SK-N-SH (cell line): ENCODE measurements at regions of chr1 and their contacts with region 1.

Region 1: GRCh38 chr1:21963477-21964217 is 13.2 kb upstream of the CELA3B start:
- DNase-seq: peak; percentile 81
- H3K4me3 ChIP-seq: no peak overlapping the region; a peak in 1 of 4 replicates
- H3K27ac ChIP-seq: no peak overlapping the region
- H3K4me1 ChIP-seq: peaks cover 0 to 11% of the 10 kb centered on the region in 2 experiments; a peak in 1 of 4 replicates
- H3K27me3 ChIP-seq: no peaks in the 10 kb centered on the region
- CTCF ChIP-seq: peak; percentile 95
- EP300 ChIP-seq: no peak
- RAD21 ChIP-seq: peak; percentile 96

Region 2: GRCh38 chr1:21669258-21670058 is 294.2 kb before region 1 on chr1 and contains the start of gene RAP1GAP:
- CTCF ChIA-PET with region 1: interaction called, 11 read pairs
- POLR2A ChIA-PET with region 1: no interaction called
- DNase-seq: peak; percentile 86
- H3K4me3 ChIP-seq: peak within 1 kb of the TSS in 1 of 2 experiments; percentile 44; a peak in 2 of 4 replicates
- H3K27ac ChIP-seq: no peak within 1 kb of the TSS
- H3K4me1 ChIP-seq: peaks cover 9 to 30% of the 10 kb centered on the region in 2 experiments; a peak in 3 of 4 replicates
- H3K27me3 ChIP-seq: peaks cover 8% of the 10 kb centered on the region; the same call in 1 of the 2 replicates
- CTCF ChIP-seq: no peak
- EP300 ChIP-seq: no peak
- RAD21 ChIP-seq: no peak
- polyA plus RNA-seq, gene RAP1GAP: 0.78 and 0.99 TPM in 2 replicates

Region 3: DNA sequence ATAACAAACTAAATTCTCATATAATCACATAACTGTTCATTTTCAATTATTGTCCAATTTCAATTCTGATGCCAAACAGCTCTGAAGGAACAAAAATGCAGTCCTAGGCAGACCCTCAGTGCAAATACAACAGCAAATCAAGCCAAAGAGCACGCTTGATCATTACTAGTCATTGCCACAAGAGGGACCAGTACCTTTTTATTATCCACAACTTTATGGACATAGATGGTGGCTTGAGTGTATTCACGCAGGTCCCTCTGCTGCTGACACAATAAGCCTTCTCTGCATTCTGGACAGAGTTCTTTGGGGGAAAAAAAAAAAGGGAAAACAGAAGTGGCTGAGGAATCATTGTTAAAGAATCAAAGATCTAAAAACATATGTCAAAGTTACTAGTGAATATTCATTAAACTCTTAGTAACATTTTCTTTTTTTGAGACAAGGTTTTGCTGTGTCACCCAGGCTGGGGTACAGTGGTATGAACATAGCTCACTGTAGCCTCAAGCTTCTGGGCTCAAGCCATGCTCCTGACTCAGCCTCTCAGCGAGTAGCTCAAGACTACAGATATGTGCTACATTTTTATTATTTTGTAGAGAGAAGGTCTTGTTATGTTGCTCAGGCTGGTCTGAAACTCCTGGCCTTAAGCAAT is 260.2 kb before region 1 on chr1:
- CTCF ChIA-PET with region 1: interaction called, 20 read pairs
- POLR2A ChIA-PET with region 1: no interaction called
- DNase-seq: peak; percentile 49
- H3K4me3 ChIP-seq: no peak overlapping the region
- H3K27ac ChIP-seq: peak overlapping the region in 1 of 2 experiments; percentile 45; a peak in 2 of 4 replicates
- H3K4me1 ChIP-seq: no peaks in the 10 kb centered on the region
- H3K27me3 ChIP-seq: no peaks in the 10 kb centered on the region
- CTCF ChIP-seq: peak; percentile 65
- EP300 ChIP-seq: no peak
- RAD21 ChIP-seq: peak; percentile 64

Region 4: DNA sequence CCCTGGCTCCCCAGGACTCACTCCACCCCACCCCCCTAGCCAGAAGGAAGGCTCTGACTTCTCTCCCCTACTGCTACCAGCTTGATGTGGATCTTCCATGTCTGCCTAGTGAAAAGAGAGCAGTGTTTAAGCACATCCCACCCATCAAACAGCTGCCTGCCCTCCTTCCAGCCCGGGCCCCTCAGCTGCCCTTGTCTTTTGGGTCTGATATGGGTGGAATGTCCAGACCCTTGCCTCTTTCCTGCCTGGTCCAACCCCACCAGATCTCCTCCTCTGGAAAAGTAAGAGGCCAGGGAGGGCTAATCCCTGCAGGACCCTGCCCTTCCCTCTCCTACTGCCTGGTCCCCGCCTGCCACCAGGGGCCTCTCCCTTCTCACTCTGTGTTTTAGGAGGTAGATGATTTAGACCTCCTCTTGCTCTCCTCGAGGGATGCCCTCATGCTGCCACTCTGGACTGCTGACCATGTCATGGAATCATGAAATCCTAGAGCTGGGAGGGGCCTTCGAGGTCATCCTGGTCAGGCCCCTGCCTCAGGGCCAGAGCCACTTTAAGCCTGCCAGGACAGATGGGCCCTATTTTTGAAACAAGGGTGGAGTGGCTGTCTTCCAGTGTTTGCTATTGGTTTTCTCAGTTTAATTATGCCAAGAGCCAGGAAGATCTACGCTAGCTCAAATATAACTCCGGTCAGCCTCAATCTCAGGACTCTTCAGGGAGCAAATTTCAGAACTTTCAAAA is 10.7 kb before region 1 on chr1:
- CTCF ChIA-PET with region 1: interaction called, 19 read pairs
- POLR2A ChIA-PET with region 1: no interaction called
- DNase-seq: no peak
- H3K4me3 ChIP-seq: no peak overlapping the region
- H3K27ac ChIP-seq: no peak overlapping the region
- H3K4me1 ChIP-seq: peaks cover 12 to 15% of the 10 kb centered on the region in 2 experiments; a peak in 3 of 4 replicates
- H3K27me3 ChIP-seq: no peaks in the 10 kb centered on the region
- CTCF ChIP-seq: no peak
- EP300 ChIP-seq: no peak
- RAD21 ChIP-seq: no peak